ENCODE measurements at regions of chr4 and their contacts with region 1.

Region 1: DNA sequence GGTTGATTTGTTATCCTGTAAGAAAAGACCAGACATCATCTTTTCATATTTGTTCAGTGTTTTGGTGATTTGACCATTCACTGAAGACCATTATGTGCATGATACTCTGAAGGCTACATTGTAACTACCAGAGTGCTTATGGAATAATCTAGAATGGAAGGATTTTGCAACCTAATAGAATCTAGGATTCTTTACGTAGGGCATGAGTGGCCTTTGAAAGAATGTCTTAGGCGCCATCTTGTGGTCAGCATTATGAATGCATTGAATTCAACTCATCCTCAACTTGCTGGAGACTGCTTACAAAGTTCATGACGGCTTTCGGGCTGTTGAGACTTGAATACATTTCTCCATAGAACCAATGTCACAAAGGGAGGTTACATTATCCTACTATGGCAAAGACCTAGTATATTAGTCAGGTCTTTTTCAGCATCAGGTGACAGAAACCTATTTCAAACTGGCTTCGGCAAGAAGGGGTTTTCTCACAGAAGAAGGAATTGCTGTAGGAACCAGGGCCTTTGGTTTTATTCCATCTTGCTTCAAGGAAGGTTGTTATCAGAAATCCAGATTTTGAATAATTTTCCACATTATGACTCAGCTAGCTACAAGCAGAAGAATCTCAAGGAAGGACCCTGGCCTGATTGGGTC is 104.1 kb downstream of the GPAT3 start:
- DNase-seq: no peak
- ATAC-seq: peak; percentile 62
- H3K4me3 Mint-ChIP-seq: no peak overlapping the region
- H3K27ac Mint-ChIP-seq: no peak overlapping the region
- H3K4me1 Mint-ChIP-seq: peaks cover 2% of the 10 kb centered on the region
- H3K27me3 Mint-ChIP-seq: peaks cover 9% of the 10 kb centered on the region
- CTCF ChIP-seq: no peak

Region 2: DNA sequence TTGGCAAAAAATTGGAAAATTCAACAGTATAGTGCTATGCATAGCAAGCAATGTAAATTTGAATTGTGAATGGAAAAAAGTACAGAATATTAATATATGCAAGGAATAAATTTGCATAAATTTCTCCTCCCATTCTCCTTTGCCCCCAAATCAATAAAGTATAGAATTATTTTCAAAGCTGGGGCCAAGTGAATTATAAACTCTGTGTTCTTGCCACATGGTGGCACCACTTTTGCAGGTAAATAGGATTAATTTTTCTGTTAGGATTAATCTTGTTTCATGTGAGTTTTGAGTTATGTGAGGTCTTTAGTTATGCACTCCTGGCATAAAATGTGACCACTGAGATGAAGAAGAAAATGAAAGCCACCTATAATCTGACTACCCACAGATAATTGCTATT is 585.0 kb before region 1 on chr4:
- CTCF ChIA-PET with region 1: no interaction called
- POLR2A ChIA-PET with region 1: no interaction called
- intact Hi-C with region 1: loop called (anchors 5 kb)
- DNase-seq: no peak
- ATAC-seq: no peak
- H3K4me3 Mint-ChIP-seq: no peak overlapping the region
- H3K27ac Mint-ChIP-seq: no peak overlapping the region
- H3K4me1 Mint-ChIP-seq: peaks cover 2% of the 10 kb centered on the region
- H3K27me3 Mint-ChIP-seq: no peaks in the 10 kb centered on the region
- CTCF ChIP-seq: no peak

Region 3: GRCh38 chr4:83473423-83473822 is 166.5 kb before region 1 on chr4:
- CTCF ChIA-PET with region 1: no interaction called
- POLR2A ChIA-PET with region 1: no interaction called
- intact Hi-C with region 1: no loop called
- DNase-seq: no peak
- ATAC-seq: no peak
- H3K4me3 Mint-ChIP-seq: no peak overlapping the region
- H3K27ac Mint-ChIP-seq: no peak overlapping the region
- H3K4me1 Mint-ChIP-seq: no peaks in the 10 kb centered on the region
- H3K27me3 Mint-ChIP-seq: no peaks in the 10 kb centered on the region
- CTCF ChIP-seq: no peak

Region 4: GRCh38 chr4:83484500-83485461 is 155.2 kb before region 1 on chr4 and contains the start of gene ABRAXAS1:
- CTCF ChIA-PET with region 1: interaction called, 19 read pairs
- POLR2A ChIA-PET with region 1: no interaction called
- intact Hi-C with region 1: loop called (anchors 1 kb)
- DNase-seq: peak; percentile 96
- ATAC-seq: peak; percentile 97
- H3K4me3 Mint-ChIP-seq: peak within 1 kb of the TSS; percentile 93
- H3K27ac Mint-ChIP-seq: peak within 1 kb of the TSS; percentile 94
- H3K4me1 Mint-ChIP-seq: peaks cover 19% of the 10 kb centered on the region
- H3K27me3 Mint-ChIP-seq: no peaks in the 10 kb centered on the region
- CTCF ChIP-seq: no peak
- total RNA-seq, gene ABRAXAS1: 23.5 and 24.2 TPM in 2 replicates

Region 5: DNA sequence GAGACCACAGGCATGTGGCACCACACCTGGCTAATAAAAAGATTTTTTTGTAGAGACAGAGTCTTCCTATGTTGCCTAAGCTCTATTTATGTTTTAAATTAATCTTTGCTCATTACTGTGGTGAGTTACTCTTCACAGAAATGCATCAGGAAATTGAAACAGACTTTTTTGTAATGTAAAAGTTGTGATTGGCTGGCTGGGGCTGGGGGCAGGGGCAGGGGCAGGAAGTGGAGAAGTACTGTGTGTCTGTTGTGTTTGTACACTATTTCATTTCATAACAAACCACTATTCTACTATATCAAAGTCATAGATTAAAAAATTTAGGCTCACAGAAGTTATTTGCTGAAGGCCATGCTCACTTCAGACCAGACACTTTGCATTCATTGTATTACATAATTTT is 136.0 kb before region 1 on chr4:
- CTCF ChIA-PET with region 1: interaction called, 70 read pairs
- POLR2A ChIA-PET with region 1: no interaction called
- intact Hi-C with region 1: loop called (anchors 1 kb)
- DNase-seq: no peak
- ATAC-seq: no peak
- H3K4me3 Mint-ChIP-seq: no peak overlapping the region
- H3K27ac Mint-ChIP-seq: no peak overlapping the region
- H3K4me1 Mint-ChIP-seq: no peaks in the 10 kb centered on the region
- H3K27me3 Mint-ChIP-seq: no peaks in the 10 kb centered on the region
- CTCF ChIP-seq: no peak

Region 6: DNA sequence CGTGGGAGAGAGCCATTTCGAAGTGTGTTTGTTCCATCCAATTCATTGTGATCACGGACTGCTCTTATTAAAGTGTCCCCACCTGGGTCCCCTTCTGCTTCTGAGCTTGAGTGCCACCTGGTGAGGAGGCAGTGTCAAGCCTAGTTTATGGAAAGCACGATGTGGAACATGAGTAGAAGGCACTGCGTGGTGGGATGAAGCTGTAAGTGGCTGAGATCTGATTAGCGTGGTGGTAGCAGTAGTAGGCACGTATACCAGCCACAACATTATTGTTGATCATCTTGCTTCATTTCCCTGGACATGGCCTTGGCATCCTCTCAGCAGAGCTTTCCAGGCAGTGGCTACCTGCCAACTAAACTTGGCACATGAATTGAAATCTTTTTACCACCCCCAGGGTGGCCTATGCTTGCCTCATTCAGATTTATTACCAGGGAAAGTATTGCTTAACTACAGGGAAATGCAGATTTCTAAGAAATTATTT is 57.6 kb before region 1 on chr4:
- CTCF ChIA-PET with region 1: interaction called, 5 read pairs
- POLR2A ChIA-PET with region 1: no interaction called
- intact Hi-C with region 1: loop called (anchors 1 kb)
- DNase-seq: peak; percentile 26
- ATAC-seq: peak; percentile 65
- H3K4me3 Mint-ChIP-seq: peak overlapping the region; percentile 75
- H3K27ac Mint-ChIP-seq: peak overlapping the region; percentile 83
- H3K4me1 Mint-ChIP-seq: peaks cover 21% of the 10 kb centered on the region
- H3K27me3 Mint-ChIP-seq: no peaks in the 10 kb centered on the region
- CTCF ChIP-seq: no peak

Region 7: DNA sequence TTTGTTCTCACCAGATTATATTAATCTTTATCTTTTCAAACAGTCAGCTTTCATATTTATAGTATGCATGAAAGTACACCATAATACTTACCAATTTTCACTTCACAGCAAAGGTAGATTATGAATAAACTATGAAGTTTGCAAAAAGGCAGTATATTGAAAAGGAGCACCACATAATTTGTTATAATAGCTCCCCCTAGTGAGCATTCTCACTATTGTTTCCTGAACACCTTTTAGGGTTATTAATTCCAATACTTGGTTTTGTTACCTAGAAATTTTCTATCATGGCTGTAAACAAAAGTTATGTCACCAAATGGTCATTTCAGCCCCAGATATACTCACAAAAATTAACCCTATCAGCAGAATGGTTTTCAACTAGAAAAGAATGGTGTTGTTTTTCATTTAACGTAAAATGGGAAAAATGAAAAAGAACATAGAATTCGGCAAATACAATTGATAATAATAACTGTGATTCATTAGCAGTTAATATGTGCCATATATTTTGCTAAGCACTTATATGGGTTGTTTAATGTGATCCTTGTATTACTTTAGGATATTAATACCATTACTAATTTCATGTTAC is 889.3 kb after region 1 on chr4:
- CTCF ChIA-PET with region 1: interaction called, 6 read pairs
- POLR2A ChIA-PET with region 1: no interaction called
- intact Hi-C with region 1: loop called (anchors 1 kb)
- DNase-seq: no peak
- ATAC-seq: no peak
- H3K4me3 Mint-ChIP-seq: no peak overlapping the region
- H3K27ac Mint-ChIP-seq: no peak overlapping the region
- H3K4me1 Mint-ChIP-seq: no peaks in the 10 kb centered on the region
- H3K27me3 Mint-ChIP-seq: peaks cover 5% of the 10 kb centered on the region
- CTCF ChIP-seq: no peak

Measured in activated B cell treated with CpG ODN at 0.5 μM for 24 hours (primary cell).